Mammary epithelial cell (primary cell): ENCODE measurements at regions of chrX and their contacts with region 1.

Region 1: DNA sequence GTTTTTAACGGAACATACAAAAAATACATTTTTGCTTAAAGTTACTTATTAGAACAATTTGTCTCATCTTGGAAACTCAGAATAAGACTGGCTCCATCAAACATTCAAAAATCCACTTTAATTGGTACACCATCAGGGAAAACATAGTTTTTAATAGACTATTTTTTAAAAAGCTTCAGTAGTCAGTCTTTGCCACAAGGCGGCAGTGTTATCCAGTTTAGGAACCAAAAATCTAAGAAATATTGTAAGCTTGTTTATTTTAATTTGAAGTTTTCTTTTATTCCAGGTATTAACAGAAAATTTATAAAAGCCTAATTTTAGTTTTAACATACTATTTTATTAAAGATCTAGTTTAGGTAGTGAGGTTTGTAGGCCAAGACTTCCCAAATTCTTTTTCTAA is 107.7 kb downstream of the APOOL start:
- DNase-seq: no peak
- H3K4me3 ChIP-seq: no peak overlapping the region
- H3K27ac ChIP-seq: no peak overlapping the region
- H3K4me1 ChIP-seq: no peaks in the 10 kb centered on the region
- H3K27me3 ChIP-seq: no peaks in the 10 kb centered on the region
- CTCF ChIP-seq: peak; percentile 75 to 91

Region 2: GRCh38 chrX:85140964-85141363 is 29.6 kb after region 1 on chrX:
- CTCF ChIA-PET with region 1: no interaction called
- dilution Hi-C with region 1: no loop called
- in situ Hi-C with region 1: no loop called
- intact Hi-C with region 1: no loop called
- DNase-seq: no peak
- H3K4me3 ChIP-seq: no peak overlapping the region
- H3K27ac ChIP-seq: no peak overlapping the region
- H3K4me1 ChIP-seq: no peaks in the 10 kb centered on the region
- H3K27me3 ChIP-seq: no peaks in the 10 kb centered on the region
- CTCF ChIP-seq: no peak

Region 3: DNA sequence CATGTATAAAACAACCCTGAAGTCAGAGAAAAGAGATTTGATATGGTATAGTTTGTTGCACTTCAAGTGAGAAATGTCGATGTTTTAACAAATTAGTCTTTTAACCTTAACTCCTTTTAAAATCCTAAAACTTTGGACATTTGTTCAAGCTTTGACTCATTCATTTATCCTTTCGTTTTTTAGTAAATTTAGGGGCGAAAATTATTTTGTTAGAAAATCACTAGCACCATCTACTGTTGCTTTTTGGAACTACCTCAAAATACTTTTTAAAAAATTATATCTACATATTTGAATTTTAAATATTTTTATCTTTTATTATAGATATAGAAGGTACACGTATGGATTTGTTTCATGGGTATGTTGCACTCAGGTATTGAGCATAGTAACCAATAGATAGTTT is 433.3 kb after region 1 on chrX:
- CTCF ChIA-PET with region 1: interaction called, 5 read pairs
- dilution Hi-C with region 1: loop called (anchors 25 kb)
- in situ Hi-C with region 1: loop called (anchors 10 kb)
- intact Hi-C with region 1: loop called (anchors 1 kb)
- DNase-seq: no peak
- H3K4me3 ChIP-seq: no peak overlapping the region
- H3K27ac ChIP-seq: no peak overlapping the region
- H3K4me1 ChIP-seq: no peaks in the 10 kb centered on the region
- H3K27me3 ChIP-seq: no peaks in the 10 kb centered on the region
- CTCF ChIP-seq: peak; percentile 19 to 46

Region 4: GRCh38 chrX:86946569-86946968 is 1835.2 kb after region 1 on chrX:
- CTCF ChIA-PET with region 1: no interaction called
- dilution Hi-C with region 1: no loop called
- in situ Hi-C with region 1: no loop called
- intact Hi-C with region 1: loop called (anchors 10 kb)
- DNase-seq: peak; percentile 13
- H3K4me3 ChIP-seq: no peak overlapping the region
- H3K27ac ChIP-seq: no peak overlapping the region
- H3K4me1 ChIP-seq: no peaks in the 10 kb centered on the region
- H3K27me3 ChIP-seq: no peaks in the 10 kb centered on the region
- CTCF ChIP-seq: peak; percentile 82 to 83